Activated CD8-positive, alpha-beta T cell treated with anti-CD3 and anti-CD28 coated beads, Interleukin-2, amount 10 ng/mL, durations not matched to agents 7 days and 5 days (primary cell): ENCODE measurements at regions of chr22 and their contacts with region 1.

Region 1: GRCh38 chr22:20116951-20117645 is at the start of gene TRMT2A:
- DNase-seq: peak; percentile 98
- ATAC-seq: peak; percentile 82
- H3K4me3 Mint-ChIP-seq: peak within 1 kb of the TSS; percentile 90
- H3K27ac Mint-ChIP-seq: peak within 1 kb of the TSS; percentile 98
- H3K4me1 Mint-ChIP-seq: peaks cover 68% of the 10 kb centered on the region
- H3K27me3 Mint-ChIP-seq: no peaks in the 10 kb centered on the region
- total RNA-seq, gene TRMT2A: 92.1 to 102 TPM

Region 2: GRCh38 chr22:20130739-20131596 is 13.9 kb after region 1 on chr22:
- CTCF ChIA-PET with region 1: interaction called, 28 read pairs
- POLR2A ChIA-PET with region 1: interaction called, 6 read pairs
- DNase-seq: peak; percentile 74
- ATAC-seq: peak; percentile 69
- H3K4me3 Mint-ChIP-seq: peak overlapping the region; percentile 62
- H3K27ac Mint-ChIP-seq: peak overlapping the region; percentile 64
- H3K4me1 Mint-ChIP-seq: peaks cover 24% of the 10 kb centered on the region
- H3K27me3 Mint-ChIP-seq: no peaks in the 10 kb centered on the region

Region 3: DNA sequence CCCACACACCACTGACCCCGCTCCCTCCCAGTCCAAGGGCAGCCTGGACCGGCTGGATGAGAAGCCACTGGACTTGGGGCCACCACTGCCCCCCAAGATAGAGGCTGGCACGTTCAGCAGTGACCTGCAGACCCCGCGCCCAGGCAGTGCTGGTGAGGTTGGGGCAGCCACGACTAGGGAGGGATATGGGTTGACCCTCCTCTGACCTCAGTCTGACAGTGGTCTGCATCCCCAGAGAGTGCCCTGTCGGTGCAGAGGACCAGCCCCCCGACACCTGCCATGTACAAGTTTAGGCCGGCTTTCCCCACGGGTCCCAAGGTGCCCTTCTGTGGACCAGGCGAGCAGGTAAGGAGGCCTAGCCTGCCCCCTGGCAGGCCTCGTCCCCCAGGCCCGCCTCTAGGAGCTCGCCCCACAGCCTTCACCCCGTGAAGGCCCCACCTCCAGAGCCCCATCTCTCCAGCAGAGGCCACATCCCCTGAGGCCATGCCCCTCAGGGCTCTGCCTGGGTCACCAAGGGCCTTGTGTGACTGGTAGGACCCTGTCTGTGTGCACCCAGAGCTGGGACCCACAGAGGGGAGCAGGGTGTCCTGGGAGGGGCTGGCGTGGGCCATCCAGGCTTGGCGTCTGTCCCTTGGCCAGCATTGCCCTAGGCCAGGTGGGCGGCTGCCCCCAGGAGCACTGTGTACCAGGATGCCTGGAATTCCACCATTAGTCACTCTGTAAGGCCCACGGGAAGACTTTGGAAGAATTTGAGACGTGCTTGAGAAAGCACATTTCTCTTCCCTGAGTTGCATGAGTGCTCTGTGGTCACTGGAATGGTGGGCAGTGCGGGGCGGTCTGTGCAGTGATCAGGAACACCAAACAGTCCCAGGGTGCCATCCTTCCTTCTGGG is 24.3 kb after region 1 on chr22:
- CTCF ChIA-PET with region 1: no interaction called
- POLR2A ChIA-PET with region 1: no interaction called
- DNase-seq: no peak
- ATAC-seq: no peak
- H3K4me3 Mint-ChIP-seq: no peak overlapping the region
- H3K27ac Mint-ChIP-seq: no peak overlapping the region
- H3K4me1 Mint-ChIP-seq: peaks cover 1% of the 10 kb centered on the region
- H3K27me3 Mint-ChIP-seq: no peaks in the 10 kb centered on the region